ENCODE measurements at regions of chr15 and their contacts with region 1.

Region 1: DNA sequence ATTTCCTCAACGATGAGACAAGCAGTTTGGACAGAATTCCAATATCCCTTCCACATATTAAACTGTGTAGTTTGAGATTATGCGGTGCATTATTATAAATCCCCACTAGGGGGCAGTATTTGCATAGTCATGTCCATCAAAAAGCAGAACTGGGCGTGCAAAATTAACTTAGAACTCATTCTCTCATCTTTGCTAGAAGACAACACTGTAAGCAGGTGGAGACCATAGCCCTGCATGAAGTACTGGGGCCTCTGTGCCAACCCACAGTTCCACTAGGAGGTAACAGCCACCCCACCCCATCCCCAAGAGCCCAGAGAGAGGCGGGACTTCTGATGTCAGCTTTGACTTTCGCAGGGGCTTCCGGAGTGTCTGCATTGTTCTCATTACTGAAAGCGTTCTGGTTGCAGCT is 106.6 kb upstream of the TMC3 start:
- DNase-seq: peak; percentile 11
- ATAC-seq: peak; percentile 78
- H3K4me3 ChIP-seq: no peak overlapping the region
- H3K27ac ChIP-seq: no peak overlapping the region
- H3K4me1 ChIP-seq: no peaks in the 10 kb centered on the region
- H3K27me3 ChIP-seq: no peaks in the 10 kb centered on the region; a peak in 1 of 4 replicates
- CTCF ChIP-seq: peak; percentile 52 to 81 (median 77); a peak in 5 of 6 replicates
- EP300 ChIP-seq: no peak
- POLR2A ChIP-seq: no peak
- RAD21 ChIP-seq: peak; percentile 82

Region 2: DNA sequence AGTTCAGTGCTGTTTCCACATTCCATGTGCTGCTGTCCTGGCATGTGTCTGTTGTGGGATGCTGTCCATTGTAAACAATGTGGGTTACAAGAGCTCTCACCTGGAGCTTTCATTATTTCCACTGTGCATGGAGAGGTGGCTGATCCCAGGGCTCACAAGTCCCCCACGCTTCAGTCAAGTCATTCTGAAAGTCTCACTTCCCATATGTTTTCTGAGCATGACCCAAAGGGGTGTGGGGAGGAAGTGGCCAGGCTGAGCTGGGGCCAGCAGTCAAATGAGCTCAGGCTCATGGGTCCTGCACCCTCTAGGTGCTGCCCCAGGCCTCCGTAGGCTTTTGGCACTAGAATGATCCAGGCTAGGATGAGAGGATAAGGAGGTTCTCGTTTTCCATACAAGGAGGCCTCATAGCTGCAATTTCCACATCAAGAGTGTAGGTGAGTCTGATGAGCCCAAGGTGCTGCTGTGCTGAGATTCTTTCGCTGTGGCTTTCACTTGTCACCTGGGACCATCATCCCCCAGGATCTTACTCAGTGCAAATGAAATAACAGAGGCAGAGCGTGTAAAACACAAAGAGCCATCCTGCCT is 178.7 kb before region 1 on chr15:
- CTCF ChIA-PET with region 1: no interaction called
- POLR2A ChIA-PET with region 1: interaction called, 10 read pairs
- RAD21 ChIA-PET with region 1: no interaction called
- SMC1A ChIA-PET with region 1: no interaction called
- in situ Hi-C with region 1: no loop called
- intact Hi-C with region 1: no loop called
- DNase-seq: peak; percentile 80
- ATAC-seq: peak; percentile 78
- H3K4me3 ChIP-seq: peak overlapping the region; percentile 62
- H3K27ac ChIP-seq: peak overlapping the region; percentile 99
- H3K4me1 ChIP-seq: peaks cover 55% of the 10 kb centered on the region
- H3K27me3 ChIP-seq: no peaks in the 10 kb centered on the region
- CTCF ChIP-seq: no peak
- EP300 ChIP-seq: peak; percentile 93 to 96
- POLR2A ChIP-seq: no peak
- RAD21 ChIP-seq: peak; percentile 28; the same call in 1 of the 2 replicates

Region 3: GRCh38 chr15:81939604-81940440 is 459.2 kb after region 1 on chr15:
- CTCF ChIA-PET with region 1: interaction called, 12 read pairs
- POLR2A ChIA-PET with region 1: no interaction called
- RAD21 ChIA-PET with region 1: no interaction called
- SMC1A ChIA-PET with region 1: interaction called, 4 read pairs
- in situ Hi-C with region 1: loop called (anchors 5 kb)
- intact Hi-C with region 1: loop called (anchors 1 kb)
- DNase-seq: no peak
- ATAC-seq: no peak
- H3K4me3 ChIP-seq: no peak overlapping the region
- H3K27ac ChIP-seq: no peak overlapping the region
- H3K4me1 ChIP-seq: no peaks in the 10 kb centered on the region
- H3K27me3 ChIP-seq: no peaks in the 10 kb centered on the region
- CTCF ChIP-seq: peak; percentile 47 to 77 (median 56); a peak in 5 of 6 replicates
- EP300 ChIP-seq: no peak
- POLR2A ChIP-seq: no peak
- RAD21 ChIP-seq: peak; percentile 69

Region 4: DNA sequence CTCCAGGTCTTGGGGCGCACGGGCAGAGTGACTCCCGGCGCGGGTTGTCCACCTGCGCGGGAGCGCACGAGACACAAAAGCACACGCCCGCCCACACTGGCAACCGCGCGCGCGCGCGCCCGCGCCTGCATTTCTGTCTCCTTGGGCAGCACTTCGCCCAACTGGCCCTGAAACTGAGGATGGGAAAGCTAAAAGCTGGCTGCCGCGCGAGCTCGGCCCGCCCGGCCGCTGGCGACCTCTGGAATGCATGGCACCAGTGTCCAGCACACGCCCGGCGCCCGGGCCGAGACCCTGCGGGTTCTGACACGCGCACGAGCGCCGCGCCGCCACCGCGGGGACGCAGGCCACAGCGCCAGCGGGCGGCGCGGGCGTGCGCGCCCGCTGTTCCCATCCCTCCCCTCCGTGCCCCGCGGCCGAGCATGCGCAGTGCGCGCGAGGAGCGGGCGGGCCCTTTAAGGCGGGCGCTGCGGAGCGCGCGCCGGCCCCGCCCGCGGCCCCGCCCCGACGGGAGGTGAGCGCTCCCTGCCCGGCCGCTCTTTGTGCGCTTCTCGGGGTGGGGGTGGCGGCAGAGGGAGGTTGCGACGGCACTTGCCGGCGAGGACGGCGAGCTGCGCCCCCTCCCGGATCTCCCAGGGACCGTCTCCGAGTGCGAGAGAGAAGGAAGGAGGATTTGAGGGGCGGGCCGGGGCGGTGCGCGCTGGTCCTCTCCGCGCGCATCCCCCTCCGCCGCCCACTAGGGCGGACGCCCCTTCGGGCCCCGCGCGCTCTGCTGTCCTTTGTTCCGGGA is 566.2 kb after region 1 on chr15:
- CTCF ChIA-PET with region 1: interaction called, 3 read pairs
- POLR2A ChIA-PET with region 1: no interaction called
- RAD21 ChIA-PET with region 1: no interaction called
- SMC1A ChIA-PET with region 1: no interaction called
- in situ Hi-C with region 1: no loop called
- intact Hi-C with region 1: loop called (anchors 5 kb)
- DNase-seq: no peak
- ATAC-seq: peak; percentile 77
- H3K4me3 ChIP-seq: peak overlapping the region; percentile 71
- H3K27ac ChIP-seq: peak overlapping the region; percentile 18; the same call in 1 of the 2 replicates
- H3K4me1 ChIP-seq: no peaks in the 10 kb centered on the region; the same call in 1 of the 2 replicates
- H3K27me3 ChIP-seq: peaks cover 4 to 8% of the 10 kb centered on the region in 2 experiments; a peak in 3 of 4 replicates
- CTCF ChIP-seq: peak; percentile 34 to 58 (median 51); a peak in 5 of 6 replicates
- EP300 ChIP-seq: no peak
- POLR2A ChIP-seq: no peak
- RAD21 ChIP-seq: peak; percentile 36; the same call in 1 of the 2 replicates

Region 5: GRCh38 chr15:82108489-82109078 is 627.9 kb after region 1 on chr15:
- CTCF ChIA-PET with region 1: interaction called, 5 read pairs
- POLR2A ChIA-PET with region 1: no interaction called
- RAD21 ChIA-PET with region 1: no interaction called
- SMC1A ChIA-PET with region 1: no interaction called
- in situ Hi-C with region 1: no loop called
- intact Hi-C with region 1: loop called (anchors 10 kb)
- DNase-seq: no peak
- ATAC-seq: peak; percentile 99
- H3K4me3 ChIP-seq: no peak overlapping the region
- H3K27ac ChIP-seq: no peak overlapping the region
- H3K4me1 ChIP-seq: no peaks in the 10 kb centered on the region
- H3K27me3 ChIP-seq: no peaks in the 10 kb centered on the region; a peak in 1 of 4 replicates
- CTCF ChIP-seq: peak; percentile 91 to 96 (median 93)
- EP300 ChIP-seq: no peak
- POLR2A ChIP-seq: no peak
- RAD21 ChIP-seq: peak; percentile 82

Region 6: GRCh38 chr15:82197733-82198594 is 717.3 kb after region 1 on chr15:
- CTCF ChIA-PET with region 1: interaction called, 4 read pairs
- POLR2A ChIA-PET with region 1: no interaction called
- RAD21 ChIA-PET with region 1: no interaction called
- SMC1A ChIA-PET with region 1: interaction called, 4 read pairs
- in situ Hi-C with region 1: loop called (anchors 5 kb)
- intact Hi-C with region 1: loop called (anchors 1 kb)
- DNase-seq: peak; percentile 27
- ATAC-seq: peak; percentile 99
- H3K4me3 ChIP-seq: no peak overlapping the region
- H3K27ac ChIP-seq: no peak overlapping the region
- H3K4me1 ChIP-seq: no peaks in the 10 kb centered on the region
- H3K27me3 ChIP-seq: no peaks in the 10 kb centered on the region
- CTCF ChIP-seq: peak; percentile 70 to 83 (median 80); a peak in 5 of 6 replicates
- EP300 ChIP-seq: no peak
- POLR2A ChIP-seq: no peak
- RAD21 ChIP-seq: peak; percentile 79